WTC11 (cell line): ENCODE measurements at regions of chr10 and their contacts with region 1.

Region 1: DNA sequence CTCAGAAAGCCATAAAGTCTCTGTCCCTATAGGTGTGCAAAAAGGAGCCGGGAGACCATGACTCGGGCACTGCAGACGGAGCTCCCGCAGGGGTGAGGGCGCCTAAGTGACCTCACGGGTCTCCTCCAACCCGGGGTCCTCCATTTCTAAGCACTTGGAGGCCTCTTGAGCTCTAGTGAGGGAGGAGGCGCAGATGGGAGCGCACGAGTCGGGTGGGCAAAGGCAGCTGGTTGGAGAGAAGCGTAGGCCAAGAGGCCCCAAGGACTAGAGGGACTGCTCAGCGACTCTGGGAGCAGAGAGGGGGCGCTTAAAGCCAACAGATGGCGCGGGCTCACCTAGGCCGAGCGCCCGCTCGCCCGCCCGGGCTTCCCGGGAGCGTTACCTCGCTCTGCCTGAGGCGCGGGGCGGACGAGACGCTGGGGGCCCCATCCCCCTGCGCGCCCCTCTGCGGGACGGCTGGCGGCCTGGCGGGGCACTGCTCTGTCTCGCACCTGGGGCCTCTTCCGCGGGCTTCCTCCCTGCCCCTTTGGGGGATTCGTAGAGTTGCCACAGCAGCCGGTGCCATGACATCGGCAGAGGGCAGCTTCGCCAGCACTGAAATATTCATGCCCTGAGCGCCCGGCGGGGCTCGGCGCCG is 518 bp upstream of the CDH23 start:
- DNase-seq: peak; percentile 76
- ATAC-seq: peak; percentile 86
- H3K4me3 Mint-ChIP-seq: peak overlapping the region; percentile 63
- H3K27ac Mint-ChIP-seq: no peak overlapping the region
- H3K4me1 Mint-ChIP-seq: peaks cover 20% of the 10 kb centered on the region
- H3K27me3 Mint-ChIP-seq: peaks cover 59% of the 10 kb centered on the region
- CTCF ChIP-seq: no peak

Region 2: DNA sequence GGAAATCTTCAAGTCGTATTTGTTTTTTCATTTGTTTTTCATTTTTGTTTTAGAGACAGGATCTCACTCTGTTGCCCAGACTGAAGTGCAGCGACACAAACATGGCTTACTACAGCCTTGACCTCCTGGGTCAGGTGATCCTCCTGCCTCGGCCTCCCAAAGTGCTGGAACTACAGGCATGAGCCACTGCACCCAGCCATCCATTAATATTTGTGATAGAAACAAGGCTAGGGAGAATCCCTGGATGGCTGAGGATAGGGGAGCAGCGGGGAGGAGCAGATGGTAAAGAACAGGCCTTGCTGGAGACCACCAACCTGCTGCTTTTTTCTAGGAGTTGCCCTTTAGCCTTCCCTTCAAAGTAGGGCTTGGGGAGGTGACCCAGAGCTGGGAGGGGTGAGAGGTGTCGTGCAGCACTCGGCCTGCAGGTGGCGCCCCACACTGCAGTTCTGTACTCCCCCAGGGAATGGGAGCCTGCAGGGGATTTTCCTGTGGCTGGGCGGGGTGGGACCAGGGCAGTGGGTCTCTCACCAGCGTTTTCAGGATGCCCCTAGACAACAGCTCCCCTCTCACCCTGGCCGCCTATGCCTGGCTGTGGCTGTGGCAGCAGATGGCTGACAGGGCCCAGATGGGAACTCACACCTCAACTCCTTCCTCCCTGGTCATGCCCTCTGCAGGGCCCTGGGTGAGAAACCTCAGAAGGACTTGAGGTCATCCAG is 12.1 kb before region 1 on chr10:
- CTCF ChIA-PET with region 1: interaction called, 42 read pairs
- POLR2A ChIA-PET with region 1: no interaction called
- DNase-seq: peak; percentile 93
- ATAC-seq: peak; percentile 97
- H3K4me3 Mint-ChIP-seq: no peak overlapping the region
- H3K27ac Mint-ChIP-seq: no peak overlapping the region
- H3K4me1 Mint-ChIP-seq: no peaks in the 10 kb centered on the region
- H3K27me3 Mint-ChIP-seq: no peaks in the 10 kb centered on the region
- CTCF ChIP-seq: peak; percentile 96

Region 3: GRCh38 chr10:71459513-71459912 is 63.3 kb after region 1 on chr10:
- CTCF ChIA-PET with region 1: interaction called, 13 read pairs
- POLR2A ChIA-PET with region 1: no interaction called
- DNase-seq: no peak
- ATAC-seq: peak; percentile 39; the same call in 1 of the 2 replicates
- H3K4me3 Mint-ChIP-seq: no peak overlapping the region
- H3K27ac Mint-ChIP-seq: no peak overlapping the region
- H3K4me1 Mint-ChIP-seq: no peaks in the 10 kb centered on the region
- H3K27me3 Mint-ChIP-seq: no peaks in the 10 kb centered on the region
- CTCF ChIP-seq: no peak

Region 4: DNA sequence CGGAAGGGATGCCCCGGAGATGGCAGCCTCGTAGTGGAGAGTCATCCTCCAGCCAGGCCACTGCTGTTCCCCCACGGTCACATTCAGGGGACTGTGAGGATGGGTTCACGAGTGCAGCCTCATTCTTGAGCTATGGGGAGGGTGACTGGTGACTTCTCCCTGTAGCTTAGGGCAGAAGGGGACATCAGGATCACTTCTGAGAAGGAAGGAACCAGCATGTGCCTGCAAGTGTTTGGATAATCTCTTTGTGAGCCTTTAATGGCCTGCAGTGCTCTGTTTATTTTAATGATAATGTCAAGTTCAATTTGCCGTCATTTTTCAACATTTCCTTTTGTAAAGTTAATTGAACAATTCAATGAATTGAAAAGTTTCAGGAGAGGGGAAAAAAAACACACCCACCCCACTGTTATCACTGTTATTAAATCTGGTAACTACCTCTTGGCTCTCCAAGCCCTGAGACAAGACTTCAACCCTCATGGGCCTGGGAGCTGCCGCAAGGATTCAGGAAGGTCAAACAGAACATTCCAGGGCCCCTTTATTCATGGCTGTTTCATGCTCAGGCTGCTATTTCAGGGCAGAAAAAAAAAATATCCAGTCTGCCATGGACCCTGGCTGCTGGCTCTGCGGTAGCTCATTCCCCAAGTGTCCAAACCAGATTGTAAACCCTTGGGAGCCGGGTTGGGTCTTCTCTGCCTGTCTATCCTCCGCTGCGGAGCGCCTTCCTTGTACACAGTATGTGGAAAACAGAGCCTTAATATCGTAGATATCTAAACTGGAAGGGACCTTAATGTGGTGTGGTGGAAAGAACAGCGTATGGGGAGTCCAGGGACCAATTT is 100.9 kb after region 1 on chr10:
- CTCF ChIA-PET with region 1: interaction called, 16 read pairs
- POLR2A ChIA-PET with region 1: no interaction called
- DNase-seq: no peak
- ATAC-seq: peak; percentile 55
- H3K4me3 Mint-ChIP-seq: no peak overlapping the region
- H3K27ac Mint-ChIP-seq: no peak overlapping the region
- H3K4me1 Mint-ChIP-seq: peaks cover 32% of the 10 kb centered on the region
- H3K27me3 Mint-ChIP-seq: peaks cover 91% of the 10 kb centered on the region
- CTCF ChIP-seq: no peak

Region 5: DNA sequence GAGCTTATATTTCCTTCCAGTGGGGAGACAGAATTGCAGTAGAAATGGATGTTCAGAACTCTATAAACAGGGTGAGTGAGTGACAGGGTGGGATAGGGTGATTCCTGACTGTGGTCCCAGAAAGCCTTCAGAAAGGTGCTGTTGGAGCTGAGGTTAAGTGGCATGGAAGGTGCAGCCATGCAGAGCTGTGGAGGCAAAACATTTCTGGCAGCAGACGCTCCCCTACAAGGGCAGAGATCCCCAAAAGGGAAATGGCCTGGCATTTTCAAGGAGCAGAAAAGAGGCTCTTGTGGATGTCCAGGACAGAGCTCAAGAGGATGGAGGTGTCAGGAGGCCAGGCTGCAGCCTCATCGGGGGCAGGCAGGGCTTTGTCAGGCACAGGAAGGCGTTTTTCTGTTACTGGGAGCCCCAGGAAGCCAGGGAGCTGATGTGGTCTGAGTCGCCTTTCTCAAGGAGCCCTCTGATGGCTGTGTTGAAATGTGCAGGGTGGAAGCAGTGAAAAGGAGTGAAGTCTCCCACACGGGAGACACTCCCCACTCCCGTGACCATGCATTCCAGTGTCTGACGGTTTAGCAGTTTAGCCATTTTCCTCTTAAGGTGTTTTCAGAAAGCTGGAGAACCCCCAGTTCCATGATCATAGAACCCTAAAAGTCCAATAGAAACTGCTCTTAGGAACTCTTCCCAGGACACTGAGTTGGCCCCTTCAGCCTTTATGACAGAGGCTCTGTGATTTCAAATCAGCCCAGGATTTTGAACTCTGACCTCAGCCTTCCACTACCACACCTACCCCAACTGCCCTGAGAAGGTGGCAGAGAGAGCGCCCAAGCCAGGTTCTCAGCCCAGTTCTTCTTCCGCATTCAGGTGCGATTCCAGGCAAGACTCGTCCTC is 227.1 kb after region 1 on chr10:
- CTCF ChIA-PET with region 1: interaction called, 10 read pairs
- POLR2A ChIA-PET with region 1: no interaction called
- DNase-seq: peak; percentile 45
- ATAC-seq: peak; percentile 40
- H3K4me3 Mint-ChIP-seq: peak overlapping the region; percentile 58
- H3K27ac Mint-ChIP-seq: peak overlapping the region; percentile 67
- H3K4me1 Mint-ChIP-seq: peaks cover 71% of the 10 kb centered on the region
- H3K27me3 Mint-ChIP-seq: peaks cover 1% of the 10 kb centered on the region
- CTCF ChIP-seq: no peak